Panc1 (cell line): ENCODE measurements at regions of chr3 and their contacts with region 1.

Region 1: DNA sequence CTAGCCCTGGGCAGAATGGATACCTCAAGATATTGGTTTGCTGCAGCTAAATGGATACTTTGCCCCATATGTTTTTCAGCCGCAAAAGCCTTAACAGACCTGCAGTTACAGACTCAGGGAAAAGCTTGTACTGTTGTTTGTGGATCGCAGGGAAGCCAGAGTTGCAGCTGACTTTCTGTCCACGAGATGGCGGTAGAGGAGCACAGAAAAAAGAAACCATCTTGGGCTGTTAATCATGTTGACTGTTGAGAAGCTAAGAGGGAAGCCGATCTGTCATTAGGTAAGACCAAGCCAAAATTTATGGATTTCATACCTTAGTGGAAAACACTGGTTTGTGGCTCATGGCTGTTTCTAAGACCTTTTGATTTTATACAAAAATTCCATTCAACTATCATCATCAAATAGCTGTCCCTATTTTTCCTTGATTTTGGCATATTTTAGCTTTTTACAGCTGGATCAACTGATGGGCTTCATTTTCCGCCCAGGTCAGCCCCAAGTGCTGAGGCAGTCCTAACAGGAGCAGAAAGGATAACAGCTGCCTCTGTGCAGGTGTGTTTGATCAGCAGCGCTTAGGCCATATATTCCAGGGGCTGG is 205.7 kb upstream of the ZPLD1 start:
- DNase-seq: peak; percentile 86
- ATAC-seq: peak; percentile 93
- H3K4me3 ChIP-seq: no peak overlapping the region
- H3K27ac ChIP-seq: no peak overlapping the region
- H3K4me1 ChIP-seq: no peaks in the 10 kb centered on the region
- H3K27me3 ChIP-seq: no peaks in the 10 kb centered on the region
- CTCF ChIP-seq: peak; percentile 97

Region 2: DNA sequence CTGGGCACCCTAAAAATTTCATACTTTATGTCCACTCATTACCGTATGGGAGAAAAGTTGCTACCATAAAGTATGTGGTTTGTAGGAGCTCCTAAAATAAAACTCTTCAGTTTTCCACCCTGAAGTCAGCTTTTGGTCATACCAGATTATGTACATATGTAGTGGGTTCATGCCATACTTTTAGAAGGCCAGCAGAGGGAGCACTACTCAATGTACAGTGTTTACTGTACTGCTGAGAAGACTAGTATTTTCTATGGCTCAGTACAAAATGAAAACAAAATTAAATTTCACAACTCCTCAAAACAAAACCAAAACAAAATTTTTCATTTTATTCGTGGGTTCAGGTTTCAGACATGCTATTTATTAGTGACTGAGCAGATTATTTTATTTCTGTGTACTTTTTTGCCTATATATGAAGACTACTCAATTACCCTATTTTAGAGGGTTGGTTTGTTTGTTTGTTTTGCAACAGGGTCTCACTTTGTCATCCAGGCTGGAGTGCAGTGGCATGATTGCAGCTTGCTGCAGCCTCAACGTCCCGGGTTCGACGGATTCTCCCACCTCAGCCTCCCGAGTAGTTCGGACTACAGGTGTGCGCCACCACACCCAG is 425.9 kb before region 1 on chr3:
- CTCF ChIA-PET with region 1: interaction called, 12 read pairs
- POLR2A ChIA-PET with region 1: no interaction called
- in situ Hi-C with region 1: no loop called
- intact Hi-C with region 1: loop called (anchors 2 kb)
- DNase-seq: no peak
- ATAC-seq: peak; percentile 99
- H3K4me3 ChIP-seq: no peak overlapping the region
- H3K27ac ChIP-seq: no peak overlapping the region
- H3K4me1 ChIP-seq: no peaks in the 10 kb centered on the region
- H3K27me3 ChIP-seq: no peaks in the 10 kb centered on the region
- CTCF ChIP-seq: peak; percentile 89

Region 3: GRCh38 chr3:101809178-101810021 is 419.8 kb before region 1 on chr3:
- CTCF ChIA-PET with region 1: interaction called, 7 read pairs
- POLR2A ChIA-PET with region 1: interaction called, 3 read pairs
- in situ Hi-C with region 1: no loop called
- intact Hi-C with region 1: loop called (anchors 2 kb)
- DNase-seq: no peak
- ATAC-seq: no peak
- H3K4me3 ChIP-seq: no peak overlapping the region
- H3K27ac ChIP-seq: no peak overlapping the region
- H3K4me1 ChIP-seq: no peaks in the 10 kb centered on the region
- H3K27me3 ChIP-seq: no peaks in the 10 kb centered on the region
- CTCF ChIP-seq: peak; percentile 75; the same call in 1 of the 2 replicates

Region 4: GRCh38 chr3:102207151-102207571 is 22.0 kb before region 1 on chr3:
- CTCF ChIA-PET with region 1: interaction called, 12 read pairs
- POLR2A ChIA-PET with region 1: no interaction called
- in situ Hi-C with region 1: no loop called
- intact Hi-C with region 1: no loop called
- DNase-seq: no peak
- ATAC-seq: no peak
- H3K4me3 ChIP-seq: no peak overlapping the region
- H3K27ac ChIP-seq: no peak overlapping the region
- H3K4me1 ChIP-seq: no peaks in the 10 kb centered on the region
- H3K27me3 ChIP-seq: no peaks in the 10 kb centered on the region
- CTCF ChIP-seq: no peak

Region 5: DNA sequence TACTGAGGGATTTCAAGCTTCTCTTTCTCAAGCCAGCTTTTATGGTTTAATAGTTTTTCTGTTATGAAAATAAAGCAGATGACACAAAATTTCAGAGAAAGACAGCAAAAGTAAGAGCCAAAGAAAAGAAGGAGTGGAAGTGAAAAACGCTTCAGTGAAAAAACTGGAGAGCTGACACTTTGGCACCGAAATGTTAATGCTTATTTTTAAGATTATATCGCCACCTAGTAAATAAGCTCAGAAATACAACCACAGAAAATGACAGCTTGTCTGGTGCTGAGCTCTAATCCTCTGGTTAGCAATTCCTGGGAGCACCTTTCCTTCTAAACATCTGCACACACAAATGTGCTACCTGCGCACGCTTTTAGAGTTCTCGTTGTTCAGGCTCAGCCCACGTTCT is 307.3 kb after region 1 on chr3:
- CTCF ChIA-PET with region 1: interaction called, 33 read pairs
- POLR2A ChIA-PET with region 1: no interaction called
- in situ Hi-C with region 1: loop called (anchors 25 kb)
- intact Hi-C with region 1: loop called (anchors 1 kb)
- DNase-seq: peak; percentile 25
- ATAC-seq: peak; percentile 84
- H3K4me3 ChIP-seq: no peak overlapping the region
- H3K27ac ChIP-seq: no peak overlapping the region
- H3K4me1 ChIP-seq: no peaks in the 10 kb centered on the region
- H3K27me3 ChIP-seq: no peaks in the 10 kb centered on the region
- CTCF ChIP-seq: peak; percentile 69